Activated T-helper 1 cell treated with anti-CD3 and anti-CD28 coated beads, Interleukin-12 subunit alpha, Interleukin-12 subunit beta, Interleukin-2, Interleukin-4 antibody, amounts not matched to agents 30 ng/mL and 10 ng/mL and 1 ng/mL, durations not matched to agents 14 hours and 24 hours and 36 hours (primary cell): ENCODE measurements at regions of chr17 and their contacts with region 1.

Region 1: GRCh38 chr17:64025732-64026294 is 5.4 kb upstream of the ICAM2 start:
- DNase-seq: peak; percentile 85
- H3K4me3 Mint-ChIP-seq: peak overlapping the region; percentile 80
- H3K27ac Mint-ChIP-seq: peak overlapping the region; percentile 88
- H3K4me1 Mint-ChIP-seq: peaks cover 70% of the 10 kb centered on the region
- H3K27me3 Mint-ChIP-seq: no peaks in the 10 kb centered on the region

Region 2: DNA sequence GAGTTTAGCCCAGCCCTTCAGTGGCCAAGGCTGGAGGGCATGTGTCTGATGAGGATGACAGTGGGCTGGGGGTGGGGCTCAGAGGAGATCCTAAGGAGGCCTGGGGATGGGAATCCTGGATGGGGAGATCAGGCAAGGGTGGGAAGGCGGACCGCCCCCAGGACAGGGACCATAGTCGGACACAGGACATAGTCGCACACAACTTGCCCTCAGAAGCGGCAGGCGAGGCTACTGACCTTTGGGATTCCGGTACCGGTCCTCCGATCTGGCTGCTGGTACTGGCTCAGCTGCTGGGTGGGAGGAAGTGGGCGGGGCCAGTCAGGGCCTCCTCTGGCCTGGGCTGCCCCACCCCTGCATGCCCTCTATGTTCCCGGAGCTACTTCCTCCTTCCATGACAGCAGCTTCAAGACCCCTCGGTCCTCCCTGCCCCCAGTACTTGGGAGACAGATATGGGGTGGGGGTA is 94.7 kb before region 1 on chr17:
- intact Hi-C with region 1: loop called (anchors 5 kb)
- DNase-seq: peak; percentile 54
- H3K4me3 Mint-ChIP-seq: peak overlapping the region; percentile 90
- H3K27ac Mint-ChIP-seq: peak overlapping the region; percentile 91
- H3K4me1 Mint-ChIP-seq: peaks cover 17% of the 10 kb centered on the region
- H3K27me3 Mint-ChIP-seq: peaks cover 13% of the 10 kb centered on the region

Region 3: GRCh38 chr17:63984651-63985386 is 41.0 kb before region 1 on chr17:
- intact Hi-C with region 1: loop called (anchors 2 kb)
- DNase-seq: peak; percentile 55
- H3K4me3 Mint-ChIP-seq: no peak overlapping the region
- H3K27ac Mint-ChIP-seq: peak overlapping the region; percentile 91
- H3K4me1 Mint-ChIP-seq: peaks cover 15% of the 10 kb centered on the region
- H3K27me3 Mint-ChIP-seq: peaks cover 4% of the 10 kb centered on the region

Region 4: DNA sequence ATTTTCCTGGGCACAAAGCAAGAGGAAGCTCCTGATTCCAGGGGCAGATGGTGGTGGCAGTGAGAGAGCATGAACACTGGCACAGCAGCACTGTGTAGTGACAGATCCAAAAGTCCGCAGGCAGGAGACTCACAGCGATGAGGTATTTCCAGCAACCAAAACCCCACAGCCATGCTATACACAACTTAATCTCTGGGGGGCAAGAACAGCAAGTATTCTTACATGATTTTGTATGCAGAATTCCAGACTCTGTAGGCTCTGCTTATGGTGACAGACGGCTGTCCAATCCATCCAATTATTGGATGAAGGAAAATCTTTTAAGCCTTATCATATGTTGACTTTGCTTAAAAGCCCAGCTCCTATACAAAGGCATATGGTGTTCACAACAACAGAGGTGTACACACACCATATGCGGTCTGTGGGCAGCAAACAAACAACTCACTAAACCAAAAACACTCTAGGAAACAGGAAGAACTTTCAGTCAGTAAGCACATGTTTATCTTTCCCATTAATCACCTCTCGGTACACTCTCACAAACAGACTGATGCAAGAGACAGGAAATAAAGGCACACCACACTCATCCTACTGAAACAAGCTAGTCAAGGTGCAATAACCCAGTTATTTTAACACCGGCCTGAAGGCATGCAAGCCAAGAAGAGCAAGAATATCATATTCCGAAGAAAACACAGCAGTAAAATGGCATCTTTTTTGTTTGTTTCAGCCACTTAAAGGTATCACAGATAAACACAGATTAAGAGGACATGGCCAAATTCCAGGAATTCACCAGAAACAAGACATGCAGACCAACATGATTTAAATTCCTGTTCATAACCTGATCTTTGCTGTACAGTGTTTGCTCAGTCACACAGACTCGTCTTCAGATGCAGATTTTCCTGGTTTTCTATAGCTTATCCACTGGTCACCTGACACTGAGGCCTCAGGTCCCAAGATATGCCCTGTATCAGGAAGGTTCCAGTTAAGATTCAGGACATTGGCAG is 56.3 kb after region 1 on chr17:
- intact Hi-C with region 1: loop called (anchors 5 kb)
- DNase-seq: peak; percentile 53
- H3K4me3 Mint-ChIP-seq: peak overlapping the region; percentile 60
- H3K27ac Mint-ChIP-seq: no peak overlapping the region
- H3K4me1 Mint-ChIP-seq: peaks cover 8% of the 10 kb centered on the region
- H3K27me3 Mint-ChIP-seq: no peaks in the 10 kb centered on the region

Region 5: DNA sequence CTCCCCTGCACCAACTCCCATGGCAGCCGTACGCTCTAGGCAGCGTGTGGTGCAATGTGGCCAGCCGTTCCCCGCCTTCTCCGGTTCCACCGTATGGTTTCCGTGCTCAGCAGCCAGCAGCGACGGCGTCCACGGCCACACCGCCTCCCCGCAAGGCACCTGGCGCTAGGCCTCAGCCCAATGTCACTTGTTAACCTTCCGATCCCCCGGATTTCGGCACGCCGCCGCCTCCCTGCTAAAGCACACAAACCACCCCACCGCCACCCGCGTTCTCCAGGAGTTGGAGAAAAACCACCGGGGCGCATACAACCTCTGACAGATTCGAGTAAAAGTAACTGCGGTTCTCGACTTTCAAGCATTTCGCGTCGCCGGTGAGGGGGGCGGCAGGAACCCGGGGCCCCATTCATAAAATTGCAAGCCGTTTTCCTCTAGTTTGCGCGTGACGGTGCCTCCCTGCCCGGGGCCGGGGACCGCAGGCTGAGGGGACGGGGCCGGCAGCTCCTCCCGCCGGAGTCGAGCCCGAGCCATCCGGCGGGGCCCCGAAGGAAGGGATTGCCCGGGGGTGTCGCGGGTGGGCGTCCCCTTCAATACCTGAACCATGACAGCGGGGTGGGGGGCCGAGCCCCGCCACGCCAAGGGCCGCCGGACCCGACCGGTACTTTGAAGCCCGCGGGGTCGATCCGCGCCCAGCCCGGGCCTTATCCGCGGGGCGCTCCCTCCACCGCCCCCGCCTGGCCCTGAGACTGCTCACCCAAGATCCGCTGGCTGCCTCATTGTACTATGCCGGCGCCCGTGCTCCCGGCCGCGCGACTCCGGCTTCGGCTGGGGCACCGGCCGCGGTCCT is 236.8 kb after region 1 on chr17 and contains the start of gene TEX2:
- intact Hi-C with region 1: loop called (anchors 10 kb)
- DNase-seq: peak; percentile 57
- H3K4me3 Mint-ChIP-seq: peak within 1 kb of the TSS; percentile 94
- H3K27ac Mint-ChIP-seq: peak within 1 kb of the TSS; percentile 98
- H3K4me1 Mint-ChIP-seq: peaks cover 37% of the 10 kb centered on the region
- H3K27me3 Mint-ChIP-seq: peaks cover 21% of the 10 kb centered on the region
- total RNA-seq, gene TEX2: 20.6 and 21.9 TPM in 2 replicates

Region 6: DNA sequence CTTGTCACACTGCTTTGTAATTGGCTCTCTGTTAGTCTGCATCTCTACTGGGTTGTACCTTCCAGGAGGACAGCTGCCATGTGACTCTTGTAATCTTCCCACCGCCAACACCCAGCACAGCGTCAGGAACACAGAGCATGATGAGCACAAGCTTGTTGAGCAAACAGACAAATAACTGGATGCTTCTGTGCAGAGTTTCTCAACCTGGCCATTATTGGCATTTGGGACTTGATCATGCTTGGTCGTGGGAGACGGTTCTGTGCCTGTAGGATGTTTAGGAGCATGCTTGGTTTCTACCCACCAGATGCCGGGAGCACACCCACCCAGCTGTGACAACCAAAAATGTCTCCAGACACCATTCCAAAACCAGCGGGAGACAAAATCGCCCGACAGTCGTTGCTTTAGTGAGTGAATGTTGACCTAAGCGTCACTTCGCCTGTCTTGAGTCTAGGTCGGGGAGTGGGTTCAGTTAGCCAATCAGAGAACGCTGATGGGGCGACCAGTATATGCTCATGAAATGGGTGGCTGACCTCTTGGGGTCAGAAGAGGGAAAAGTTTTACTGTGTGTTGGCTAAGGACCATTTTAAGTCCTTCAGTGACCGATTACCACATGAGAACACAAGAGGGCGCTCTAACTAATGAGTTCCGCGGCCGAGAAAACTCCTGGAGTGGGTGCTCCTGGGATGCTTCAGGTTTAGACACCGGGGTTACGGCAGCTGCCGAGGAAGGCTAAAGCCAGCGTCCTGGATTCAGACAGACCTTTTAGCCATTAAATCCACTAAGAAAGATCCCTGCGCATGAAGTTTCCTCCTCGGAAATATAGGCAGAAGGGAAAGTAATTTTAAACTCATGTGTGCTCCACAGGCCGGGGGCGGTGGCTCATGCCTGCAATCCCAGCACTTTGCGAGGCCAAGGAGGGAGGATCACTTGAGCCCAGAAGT is 295.1 kb after region 1 on chr17:
- intact Hi-C with region 1: no loop called
- DNase-seq: peak; percentile 26
- H3K4me3 Mint-ChIP-seq: no peak overlapping the region
- H3K27ac Mint-ChIP-seq: no peak overlapping the region
- H3K4me1 Mint-ChIP-seq: peaks cover 18% of the 10 kb centered on the region
- H3K27me3 Mint-ChIP-seq: peaks cover 25% of the 10 kb centered on the region

Region 7: DNA sequence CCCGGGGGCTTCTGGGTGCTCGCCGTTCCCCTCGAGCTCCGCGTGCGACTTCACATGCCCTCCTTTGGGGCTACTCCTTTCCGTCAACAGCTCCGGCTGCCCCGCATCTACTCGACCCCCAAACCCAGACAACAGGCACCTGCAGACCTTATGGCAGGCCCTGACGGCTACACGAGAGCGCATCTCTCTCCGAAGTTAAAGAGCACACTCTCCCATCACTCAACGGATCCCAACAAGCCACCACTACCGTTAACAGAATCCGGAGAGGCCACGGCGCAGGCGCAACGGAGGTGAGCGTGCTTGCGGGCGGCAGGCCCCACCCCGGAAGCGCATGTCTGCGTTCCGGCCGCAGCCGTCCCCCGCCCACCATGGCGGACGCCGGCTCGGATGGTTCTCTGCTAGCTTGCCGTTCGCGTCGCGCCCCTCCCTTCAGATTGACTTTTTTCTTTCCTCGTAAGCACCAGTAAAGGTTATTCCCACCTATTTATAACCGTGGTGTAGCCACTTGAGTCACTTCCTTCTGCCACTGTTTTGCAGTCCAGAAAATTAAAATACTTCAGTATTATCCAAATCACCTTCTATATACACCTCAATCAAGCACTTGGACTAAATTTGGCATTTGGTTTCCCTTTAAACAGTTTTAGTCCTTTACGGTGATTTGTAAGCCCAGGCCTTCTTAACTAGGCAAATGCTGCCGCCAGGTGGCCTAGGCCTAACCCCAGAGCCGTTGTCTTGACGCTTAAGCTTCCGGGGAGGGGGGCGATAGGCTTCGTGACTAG is 471.2 kb after region 1 on chr17 and contains the start of gene POLG2:
- intact Hi-C with region 1: loop called (anchors 10 kb)
- DNase-seq: peak; percentile 94
- H3K4me3 Mint-ChIP-seq: peak within 1 kb of the TSS; percentile 100
- H3K27ac Mint-ChIP-seq: peak within 1 kb of the TSS; percentile 100
- H3K4me1 Mint-ChIP-seq: peaks cover 69% of the 10 kb centered on the region
- H3K27me3 Mint-ChIP-seq: no peaks in the 10 kb centered on the region
- total RNA-seq, gene POLG2: 33.3 and 36.5 TPM in 2 replicates

Region 8: DNA sequence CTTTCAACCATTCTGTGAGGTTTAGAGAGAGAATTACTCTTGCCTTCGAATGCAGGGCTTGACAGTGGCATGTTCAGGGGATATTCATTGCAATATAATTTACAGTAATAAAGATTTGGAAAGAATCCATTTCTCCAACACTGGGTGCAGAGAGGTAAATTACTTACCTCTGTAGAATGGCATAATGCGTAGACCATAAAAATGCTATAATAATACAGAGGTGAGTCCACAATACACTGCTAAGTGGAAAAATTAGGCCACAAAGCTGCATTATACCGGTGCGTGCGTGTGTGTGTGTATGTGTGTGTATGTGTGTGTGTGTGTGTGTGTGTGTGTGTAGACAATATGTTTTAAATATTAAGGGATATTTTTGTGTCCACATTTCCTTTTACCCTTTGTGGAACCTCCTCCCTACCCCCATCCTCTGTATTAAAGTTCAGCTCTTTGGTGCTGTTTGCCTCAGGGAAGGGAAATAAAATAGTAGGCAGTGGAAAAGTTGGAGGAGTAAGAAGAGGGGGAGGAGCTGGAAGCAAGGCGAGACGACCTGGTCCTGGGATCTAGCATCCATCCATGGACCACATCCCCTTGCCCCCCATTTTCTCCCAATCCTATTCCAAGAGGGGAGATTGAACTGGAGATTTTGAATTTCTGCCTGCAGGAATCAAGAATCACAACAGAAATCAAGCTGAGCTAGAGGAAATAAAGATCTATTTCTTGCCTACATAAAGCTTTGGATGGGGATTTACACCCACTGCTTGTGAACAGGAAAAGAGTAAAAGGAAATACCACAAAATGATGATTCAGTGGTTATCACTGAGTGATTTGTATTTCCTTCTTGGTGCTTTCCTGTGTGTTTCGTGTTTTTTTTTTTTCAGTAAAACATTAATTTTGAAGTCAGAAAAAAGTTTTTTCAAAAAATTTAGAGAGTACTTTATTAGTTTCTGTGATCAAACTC is 1236.1 kb after region 1 on chr17:
- intact Hi-C with region 1: no loop called
- DNase-seq: no peak
- H3K4me3 Mint-ChIP-seq: no peak overlapping the region
- H3K27ac Mint-ChIP-seq: no peak overlapping the region
- H3K4me1 Mint-ChIP-seq: peaks cover 38% of the 10 kb centered on the region
- H3K27me3 Mint-ChIP-seq: peaks cover 13% of the 10 kb centered on the region